AG04450 (cell line): ENCODE measurements at regions of chr3 and their contacts with region 1.

Region 1: GRCh38 chr3:192566706-192567290 is 160.5 kb downstream of the FGF12 start:
- DNase-seq: peak; percentile 73
- H3K4me3 ChIP-seq: no peak overlapping the region
- H3K27ac ChIP-seq: no peak overlapping the region
- H3K27me3 ChIP-seq: peaks cover 2% of the 10 kb centered on the region
- CTCF ChIP-seq: peak; percentile 79

Region 2: GRCh38 chr3:192621909-192622308 is 55.1 kb after region 1 on chr3:
- CTCF ChIA-PET with region 1: no interaction called
- POLR2A ChIA-PET with region 1: no interaction called
- DNase-seq: no peak
- H3K4me3 ChIP-seq: no peak overlapping the region
- H3K27ac ChIP-seq: no peak overlapping the region
- H3K27me3 ChIP-seq: no peaks in the 10 kb centered on the region
- CTCF ChIP-seq: no peak

Region 3: GRCh38 chr3:192802957-192803899 is 236.4 kb after region 1 on chr3:
- CTCF ChIA-PET with region 1: interaction called, 28 read pairs
- POLR2A ChIA-PET with region 1: no interaction called
- DNase-seq: peak; percentile 6
- H3K4me3 ChIP-seq: no peak overlapping the region
- H3K27ac ChIP-seq: no peak overlapping the region
- H3K27me3 ChIP-seq: no peaks in the 10 kb centered on the region
- CTCF ChIP-seq: peak; percentile 69

Region 4: DNA sequence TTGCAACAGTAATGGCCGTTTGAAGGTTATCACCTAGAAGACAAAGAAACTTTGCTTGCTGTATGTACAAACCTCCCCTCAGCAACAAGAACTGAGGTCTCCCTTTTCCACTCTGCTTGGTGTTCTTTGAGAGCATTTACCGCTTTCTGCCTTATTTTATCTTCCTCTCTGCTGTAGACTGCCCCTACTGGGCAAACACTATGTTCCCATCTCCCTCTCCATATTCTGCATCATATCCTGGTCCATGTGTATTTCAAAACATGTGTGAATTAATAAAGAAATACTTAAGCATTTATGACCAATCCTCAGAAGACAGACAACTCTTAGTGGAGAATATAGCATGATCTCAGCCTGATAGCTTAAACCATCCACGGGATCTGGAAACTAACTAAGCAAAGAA is 747.4 kb after region 1 on chr3:
- CTCF ChIA-PET with region 1: no interaction called
- POLR2A ChIA-PET with region 1: no interaction called
- DNase-seq: no peak
- H3K4me3 ChIP-seq: no peak overlapping the region
- H3K27ac ChIP-seq: no peak overlapping the region
- H3K27me3 ChIP-seq: no peaks in the 10 kb centered on the region
- CTCF ChIP-seq: peak; percentile 20; the same call in 1 of the 2 replicates